ENCODE measurements at regions of chr14 and their contacts with region 1.

Region 1: DNA sequence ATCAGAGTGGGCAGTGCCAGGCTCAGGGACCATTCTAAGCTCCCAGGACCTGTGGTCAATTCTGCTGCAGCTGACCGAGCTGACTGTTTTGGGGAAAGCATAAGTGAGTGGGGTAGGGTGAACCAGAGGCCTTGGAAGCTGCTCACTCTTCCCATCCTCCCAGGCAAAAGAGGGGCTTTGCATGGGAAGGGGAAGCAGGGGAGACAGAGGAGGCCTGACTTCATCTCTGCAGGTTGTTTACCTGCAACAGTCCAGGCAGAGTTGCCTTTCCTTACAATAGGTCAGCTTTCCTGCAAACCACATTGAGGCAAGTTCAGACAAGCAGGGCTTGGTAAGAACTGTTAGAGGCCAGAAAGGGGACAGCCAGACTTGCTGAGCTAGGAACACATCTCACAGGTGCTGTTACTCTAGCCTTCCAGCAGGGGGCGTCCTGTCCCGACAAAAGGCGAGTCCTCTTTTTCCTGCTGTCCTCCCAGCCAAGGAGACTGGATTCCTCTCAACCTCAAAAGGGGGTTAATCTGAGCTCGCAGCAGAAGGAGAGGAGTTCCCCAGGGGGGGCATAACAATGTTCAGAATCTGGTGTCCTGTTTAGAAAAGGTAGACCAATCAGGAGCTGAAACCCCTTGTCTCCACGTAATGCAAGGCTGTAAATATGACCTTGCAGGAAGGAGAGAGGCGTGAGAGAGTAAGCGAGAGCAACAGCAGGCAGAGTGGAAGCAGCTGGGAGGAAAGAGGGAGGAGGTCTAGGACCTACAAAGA is 4.3 kb upstream of the DHRS2 start:
- DNase-seq: no peak
- H3K4me3 ChIP-seq: peak overlapping the region in 2 of 4 donors; percentile 14 to 37
- H3K27ac ChIP-seq: no peak overlapping the region
- H3K4me1 ChIP-seq: peaks cover 0 to 14% (median 5%) of the 10 kb centered on the region in 3 donors
- H3K27me3 ChIP-seq: no peaks in the 10 kb centered on the region
- CTCF ChIP-seq: peak; percentile 70 to 94 (median 86)
- POLR2A ChIP-seq: no peak

Region 2: GRCh38 chr14:23861666-23862065 is 229.8 kb after region 1 on chr14:
- intact Hi-C with region 1: no loop called
- DNase-seq: no peak
- H3K4me3 ChIP-seq: no peak overlapping the region
- H3K27ac ChIP-seq: no peak overlapping the region
- H3K4me1 ChIP-seq: no peaks in the 10 kb centered on the region
- H3K27me3 ChIP-seq: no peaks in the 10 kb centered on the region
- CTCF ChIP-seq: no peak
- POLR2A ChIP-seq: no peak

Region 3: GRCh38 chr14:23910101-23910875 is 278.4 kb after region 1 on chr14:
- intact Hi-C with region 1: loop called (anchors 10 kb)
- DNase-seq: no peak
- H3K4me3 ChIP-seq: no peak overlapping the region
- H3K27ac ChIP-seq: no peak overlapping the region
- H3K4me1 ChIP-seq: no peaks in the 10 kb centered on the region
- H3K27me3 ChIP-seq: peaks cover 0 to 17% (median 0%) of the 10 kb centered on the region in 4 donors
- CTCF ChIP-seq: peak; percentile 20 to 72 (median 55)
- POLR2A ChIP-seq: no peak